ENCODE measurements at regions of chrX and their contacts with region 1.

Region 1: GRCh38 chrX:75156021-75156945 is at the start of gene ABCB7:
- DNase-seq: peak; percentile 56
- H3K4me3 Mint-ChIP-seq: peak within 1 kb of the TSS; percentile 96
- H3K27ac Mint-ChIP-seq: peak within 1 kb of the TSS; percentile 96
- H3K4me1 Mint-ChIP-seq: peaks cover 45% of the 10 kb centered on the region
- H3K27me3 Mint-ChIP-seq: no peaks in the 10 kb centered on the region
- total RNA-seq, gene ABCB7: 53.9 and 54.3 TPM in 2 replicates

Region 2: DNA sequence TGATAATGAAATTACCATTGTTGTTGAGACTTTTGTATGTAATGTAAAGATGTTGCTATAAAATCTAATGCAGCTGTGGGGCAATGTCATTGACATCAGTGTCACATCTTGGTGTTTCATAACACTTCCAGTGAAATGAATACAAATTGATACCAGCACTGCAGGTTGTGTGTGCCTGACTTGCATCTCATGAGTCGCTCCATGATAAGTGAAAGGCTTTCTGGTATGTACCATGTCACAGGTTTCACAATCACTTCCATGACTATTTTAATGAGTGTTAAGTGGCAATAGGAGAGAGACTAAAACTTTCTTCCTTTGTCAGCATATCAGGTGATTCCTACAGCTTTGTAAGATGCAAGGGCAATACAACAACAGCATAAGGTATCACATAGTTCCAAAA is 94.6 kb before region 1 on chrX:
- intact Hi-C with region 1: loop called (anchors 5 kb)
- DNase-seq: no peak
- H3K4me3 Mint-ChIP-seq: no peak overlapping the region
- H3K27ac Mint-ChIP-seq: no peak overlapping the region
- H3K4me1 Mint-ChIP-seq: peaks cover 6% of the 10 kb centered on the region
- H3K27me3 Mint-ChIP-seq: no peaks in the 10 kb centered on the region

Region 3: DNA sequence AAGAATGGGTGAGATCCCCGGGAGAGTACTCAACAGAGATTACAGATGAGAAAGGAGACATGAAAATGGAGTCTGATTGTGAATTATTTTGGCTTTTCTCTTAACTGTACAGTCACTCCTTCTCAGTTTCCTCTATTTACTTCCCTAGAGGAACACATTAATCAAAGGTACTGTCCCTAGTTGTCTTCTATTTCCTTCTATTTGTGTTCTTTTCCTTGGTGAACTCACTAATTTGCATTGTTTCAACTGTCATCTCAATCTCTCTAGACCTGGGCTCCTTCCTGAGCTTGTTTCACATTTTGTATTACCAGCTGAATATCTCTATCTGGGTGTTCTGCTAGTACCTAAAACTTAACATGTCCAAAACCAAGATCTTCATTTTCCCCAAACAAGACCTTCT is 60.0 kb before region 1 on chrX:
- intact Hi-C with region 1: loop called (anchors 10 kb)
- DNase-seq: no peak
- H3K4me3 Mint-ChIP-seq: no peak overlapping the region
- H3K27ac Mint-ChIP-seq: peak overlapping the region; percentile 71
- H3K4me1 Mint-ChIP-seq: peaks cover 18% of the 10 kb centered on the region
- H3K27me3 Mint-ChIP-seq: no peaks in the 10 kb centered on the region

Region 4: GRCh38 chrX:75118296-75118695 is 38.0 kb before region 1 on chrX:
- intact Hi-C with region 1: no loop called
- DNase-seq: no peak
- H3K4me3 Mint-ChIP-seq: no peak overlapping the region
- H3K27ac Mint-ChIP-seq: no peak overlapping the region
- H3K4me1 Mint-ChIP-seq: no peaks in the 10 kb centered on the region
- H3K27me3 Mint-ChIP-seq: no peaks in the 10 kb centered on the region

Region 5: GRCh38 chrX:75273483-75273882 is 117.2 kb after region 1 on chrX:
- intact Hi-C with region 1: loop called (anchors 1 kb)
- DNase-seq: no peak
- H3K4me3 Mint-ChIP-seq: peak overlapping the region; percentile 95
- H3K27ac Mint-ChIP-seq: peak overlapping the region; percentile 97
- H3K4me1 Mint-ChIP-seq: peaks cover 33% of the 10 kb centered on the region
- H3K27me3 Mint-ChIP-seq: no peaks in the 10 kb centered on the region